B cell (primary cell): ENCODE measurements at regions of chr6 and their contacts with region 1.

Region 1: DNA sequence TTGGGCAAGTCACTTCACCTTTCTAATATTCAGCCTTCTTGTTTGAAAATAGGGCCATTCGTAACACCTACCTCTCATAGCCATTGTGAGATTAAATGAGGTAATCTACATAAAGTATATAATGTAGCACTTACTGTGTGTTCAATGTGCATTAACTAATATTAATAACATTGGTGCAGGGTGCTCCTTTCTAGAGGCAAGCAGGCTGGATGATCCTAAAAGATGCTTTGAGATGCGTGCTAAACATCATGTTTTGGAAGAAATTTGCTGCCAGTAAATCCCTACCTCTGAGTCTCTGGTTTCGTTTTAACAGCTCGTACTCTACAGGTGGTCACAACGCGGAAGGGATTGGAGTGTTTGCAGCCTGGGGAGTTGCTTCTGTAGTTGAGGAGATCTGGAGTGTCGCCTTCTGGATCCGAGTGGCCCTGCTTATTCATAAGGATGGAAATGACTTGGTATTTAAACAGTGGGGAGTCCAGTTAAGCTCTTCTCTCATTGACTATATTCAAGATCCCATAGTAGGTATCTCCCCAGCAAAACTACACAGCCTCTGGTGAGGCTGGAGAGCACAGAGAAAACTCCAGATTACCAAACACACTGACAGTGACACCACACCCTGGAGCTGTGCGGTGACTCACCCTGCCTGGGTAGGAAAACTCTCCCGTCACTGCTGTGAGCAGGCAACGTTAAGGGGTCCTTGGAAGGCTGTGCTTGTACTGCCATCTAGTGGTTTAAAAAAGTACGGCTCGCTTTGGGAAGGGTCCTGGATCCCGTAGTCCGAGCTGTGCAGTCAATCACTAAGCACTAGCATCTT is 107.9 kb downstream of the MAP3K7 start:
- DNase-seq: peak; percentile 88
- ATAC-seq: peak; percentile 95
- H3K4me3 ChIP-seq: peak overlapping the region in 1 of 5 experiments; percentile 25
- H3K4me3 Mint-ChIP-seq: peak overlapping the region; percentile 49
- H3K27ac ChIP-seq: no peak overlapping the region
- H3K27ac Mint-ChIP-seq: peak overlapping the region; percentile 51
- H3K4me1 ChIP-seq: peaks cover 11 to 13% of the 10 kb centered on the region in 2 donors
- H3K4me1 Mint-ChIP-seq: peaks cover 17% of the 10 kb centered on the region
- H3K27me3 ChIP-seq: no peaks in the 10 kb centered on the region
- H3K27me3 Mint-ChIP-seq: no peaks in the 10 kb centered on the region
- CTCF ChIP-seq: peak; percentile 94

Region 2: GRCh38 chr6:89432875-89433251 is 1046.1 kb before region 1 on chr6 and contains the start of gene ANKRD6:
- CTCF ChIA-PET with region 1: interaction called, 8 read pairs
- POLR2A ChIA-PET with region 1: no interaction called
- intact Hi-C with region 1: loop called (anchors 2 kb)
- DNase-seq: peak; percentile 87
- ATAC-seq: peak; percentile 98
- H3K4me3 ChIP-seq: peak within 1 kb of the TSS; percentile 34 to 72 (median 69)
- H3K4me3 Mint-ChIP-seq: peak within 1 kb of the TSS; percentile 92
- H3K27ac ChIP-seq: no peak within 1 kb of the TSS
- H3K27ac Mint-ChIP-seq: peak within 1 kb of the TSS; percentile 60
- H3K4me1 ChIP-seq: peaks cover 10 to 12% of the 10 kb centered on the region in 2 donors
- H3K4me1 Mint-ChIP-seq: peaks cover 13% of the 10 kb centered on the region
- H3K27me3 ChIP-seq: no peaks in the 10 kb centered on the region
- H3K27me3 Mint-ChIP-seq: peaks cover 4% of the 10 kb centered on the region
- CTCF ChIP-seq: peak; percentile 83
- total RNA-seq, gene ANKRD6: 10.5 and 15.0 TPM in 2 replicates

Region 3: GRCh38 chr6:89940225-89941027 is 538.6 kb before region 1 on chr6:
- CTCF ChIA-PET with region 1: interaction called, 206 read pairs
- POLR2A ChIA-PET with region 1: interaction called, 8 read pairs
- intact Hi-C with region 1: loop called (anchors 1 kb)
- DNase-seq: peak; percentile 68
- ATAC-seq: peak; percentile 81
- H3K4me3 ChIP-seq: no peak overlapping the region
- H3K4me3 Mint-ChIP-seq: no peak overlapping the region
- H3K27ac ChIP-seq: no peak overlapping the region
- H3K27ac Mint-ChIP-seq: peak overlapping the region; percentile 64
- H3K4me1 ChIP-seq: no peaks in the 10 kb centered on the region
- H3K4me1 Mint-ChIP-seq: peaks cover 7% of the 10 kb centered on the region
- H3K27me3 ChIP-seq: no peaks in the 10 kb centered on the region
- H3K27me3 Mint-ChIP-seq: no peaks in the 10 kb centered on the region
- CTCF ChIP-seq: peak; percentile 79

Region 4: DNA sequence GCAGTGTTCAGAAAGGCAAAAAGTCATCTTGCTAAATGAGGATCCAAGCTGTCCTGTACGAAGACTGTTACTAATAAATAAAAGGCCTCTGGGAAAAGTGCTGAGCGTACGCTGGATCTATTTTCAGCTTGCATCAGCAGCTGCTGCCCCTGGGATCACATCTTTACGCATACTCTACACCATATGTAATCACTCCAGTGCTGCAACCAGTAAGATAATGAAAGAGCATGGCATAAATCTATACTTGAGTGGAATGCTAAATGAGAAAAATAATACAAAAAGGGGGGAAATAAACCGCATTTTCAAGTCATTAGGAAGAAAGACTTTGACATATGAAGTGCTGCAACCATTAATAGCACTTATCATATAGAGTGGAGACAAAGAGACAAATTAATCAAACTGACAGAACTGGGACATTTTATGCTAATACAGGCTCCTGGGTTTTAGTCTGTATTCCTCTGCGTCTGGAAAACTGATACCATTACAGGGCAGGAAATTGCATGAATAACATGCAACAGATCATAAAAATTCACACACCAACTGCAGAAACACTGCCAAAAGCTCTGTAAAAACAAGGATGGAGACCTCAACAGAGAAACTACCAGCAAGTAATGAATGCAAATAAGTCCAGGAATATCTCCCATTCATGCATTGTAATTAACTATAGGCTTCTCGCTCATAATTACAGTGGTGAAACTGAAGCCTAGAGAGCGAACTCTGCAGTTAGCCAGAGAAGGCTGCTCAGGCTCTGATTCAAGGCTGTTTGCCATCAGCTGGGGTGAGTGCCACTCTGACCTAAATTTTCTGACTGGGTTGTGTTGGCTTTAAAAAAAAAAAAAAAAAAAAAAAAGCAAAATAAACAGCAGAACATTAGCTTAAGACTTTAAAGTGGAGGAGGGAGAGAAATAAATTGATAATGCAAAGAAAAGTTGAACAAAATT is 500.9 kb before region 1 on chr6:
- CTCF ChIA-PET with region 1: interaction called, 11 read pairs
- POLR2A ChIA-PET with region 1: interaction called, 10 read pairs
- intact Hi-C with region 1: no loop called
- DNase-seq: no peak
- ATAC-seq: no peak
- H3K4me3 ChIP-seq: no peak overlapping the region
- H3K4me3 Mint-ChIP-seq: no peak overlapping the region
- H3K27ac ChIP-seq: no peak overlapping the region
- H3K27ac Mint-ChIP-seq: no peak overlapping the region
- H3K4me1 ChIP-seq: no peaks in the 10 kb centered on the region
- H3K4me1 Mint-ChIP-seq: peaks cover 5% of the 10 kb centered on the region
- H3K27me3 ChIP-seq: no peaks in the 10 kb centered on the region
- H3K27me3 Mint-ChIP-seq: no peaks in the 10 kb centered on the region
- CTCF ChIP-seq: no peak

Region 5: GRCh38 chr6:90179190-90180169 is 299.5 kb before region 1 on chr6:
- CTCF ChIA-PET with region 1: interaction called, 12 read pairs
- POLR2A ChIA-PET with region 1: no interaction called
- intact Hi-C with region 1: no loop called
- DNase-seq: peak; percentile 49
- ATAC-seq: no peak
- H3K4me3 ChIP-seq: peak overlapping the region in 1 of 5 experiments; percentile 37
- H3K4me3 Mint-ChIP-seq: peak overlapping the region; percentile 79
- H3K27ac ChIP-seq: peak overlapping the region; percentile 61 to 91
- H3K27ac Mint-ChIP-seq: peak overlapping the region; percentile 81
- H3K4me1 ChIP-seq: peaks cover 56 to 64% of the 10 kb centered on the region in 2 donors
- H3K4me1 Mint-ChIP-seq: peaks cover 81% of the 10 kb centered on the region
- H3K27me3 ChIP-seq: no peaks in the 10 kb centered on the region
- H3K27me3 Mint-ChIP-seq: no peaks in the 10 kb centered on the region
- CTCF ChIP-seq: peak; percentile 73

Region 6: DNA sequence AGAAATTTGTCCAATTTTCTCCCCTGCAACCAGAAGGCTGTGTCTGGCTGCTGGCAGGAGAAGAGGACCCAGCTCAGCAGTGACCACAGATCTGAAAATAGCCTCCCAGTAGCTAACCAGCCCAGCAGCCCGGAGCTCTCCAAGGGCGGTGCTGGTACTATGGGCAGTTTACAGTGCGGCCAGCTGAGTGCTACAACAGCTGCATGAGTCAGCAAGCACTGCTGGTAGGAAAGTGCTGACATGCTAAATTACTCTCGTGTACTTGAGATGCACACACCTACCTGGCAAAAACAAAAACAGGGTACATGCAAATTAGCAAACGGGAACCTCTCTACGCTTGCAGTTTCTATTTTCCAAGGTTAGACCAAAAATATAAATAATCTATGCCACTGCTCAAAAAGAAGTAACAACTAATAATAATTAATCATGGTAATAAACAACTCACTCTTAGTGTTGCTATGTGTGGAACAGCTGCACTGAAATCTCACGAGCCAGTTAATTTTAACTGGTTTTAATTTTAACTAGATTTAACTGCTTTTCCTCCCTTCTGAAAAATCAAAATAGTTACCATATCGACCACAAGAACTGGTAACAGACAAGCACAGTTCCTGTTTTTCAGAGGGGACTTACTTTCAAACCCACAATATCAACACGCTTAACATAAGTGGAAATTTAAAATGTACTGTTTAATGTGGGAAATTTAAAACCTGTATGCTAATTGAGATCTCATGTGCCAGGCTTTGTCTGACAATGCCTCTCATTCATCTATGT is 193.2 kb before region 1 on chr6:
- CTCF ChIA-PET with region 1: interaction called, 117 read pairs
- POLR2A ChIA-PET with region 1: no interaction called
- intact Hi-C with region 1: loop called (anchors 1 kb)
- DNase-seq: peak; percentile 87
- ATAC-seq: peak; percentile 70
- H3K4me3 ChIP-seq: peak overlapping the region; percentile 8 to 58 (median 32)
- H3K4me3 Mint-ChIP-seq: peak overlapping the region; percentile 73
- H3K27ac ChIP-seq: peak overlapping the region; percentile 80 to 90
- H3K27ac Mint-ChIP-seq: peak overlapping the region; percentile 85
- H3K4me1 ChIP-seq: peaks cover 78 to 90% of the 10 kb centered on the region in 2 donors
- H3K4me1 Mint-ChIP-seq: peaks cover 88% of the 10 kb centered on the region
- H3K27me3 ChIP-seq: no peaks in the 10 kb centered on the region
- H3K27me3 Mint-ChIP-seq: no peaks in the 10 kb centered on the region
- CTCF ChIP-seq: no peak

Region 7: GRCh38 chr6:90456001-90456400 is 23.0 kb before region 1 on chr6:
- CTCF ChIA-PET with region 1: interaction called, 14 read pairs
- POLR2A ChIA-PET with region 1: no interaction called
- intact Hi-C with region 1: no loop called
- DNase-seq: no peak
- ATAC-seq: no peak
- H3K4me3 ChIP-seq: no peak overlapping the region
- H3K4me3 Mint-ChIP-seq: no peak overlapping the region
- H3K27ac ChIP-seq: no peak overlapping the region
- H3K27ac Mint-ChIP-seq: no peak overlapping the region
- H3K4me1 ChIP-seq: peaks cover 6 to 9% of the 10 kb centered on the region in 2 donors
- H3K4me1 Mint-ChIP-seq: no peaks in the 10 kb centered on the region
- H3K27me3 ChIP-seq: peaks cover 0 to 4% (median 2%) of the 10 kb centered on the region in 4 experiments
- H3K27me3 Mint-ChIP-seq: peaks cover 3% of the 10 kb centered on the region
- CTCF ChIP-seq: no peak